Activated CD8-positive, alpha-beta T cell treated with anti-CD3 and anti-CD28 coated beads, Interleukin-2, amount 10 ng/mL, durations not matched to agents 7 days and 5 days (primary cell): ENCODE measurements at regions of chr17 and their contacts with region 1.

Region 1: GRCh38 chr17:76014184-76014924 is 12.8 kb downstream of the EVPL start:
- DNase-seq: peak; percentile 84
- ATAC-seq: peak; percentile 99
- H3K4me3 Mint-ChIP-seq: no peak overlapping the region
- H3K27ac Mint-ChIP-seq: no peak overlapping the region
- H3K4me1 Mint-ChIP-seq: peaks cover 8% of the 10 kb centered on the region
- H3K27me3 Mint-ChIP-seq: no peaks in the 10 kb centered on the region

Region 2: DNA sequence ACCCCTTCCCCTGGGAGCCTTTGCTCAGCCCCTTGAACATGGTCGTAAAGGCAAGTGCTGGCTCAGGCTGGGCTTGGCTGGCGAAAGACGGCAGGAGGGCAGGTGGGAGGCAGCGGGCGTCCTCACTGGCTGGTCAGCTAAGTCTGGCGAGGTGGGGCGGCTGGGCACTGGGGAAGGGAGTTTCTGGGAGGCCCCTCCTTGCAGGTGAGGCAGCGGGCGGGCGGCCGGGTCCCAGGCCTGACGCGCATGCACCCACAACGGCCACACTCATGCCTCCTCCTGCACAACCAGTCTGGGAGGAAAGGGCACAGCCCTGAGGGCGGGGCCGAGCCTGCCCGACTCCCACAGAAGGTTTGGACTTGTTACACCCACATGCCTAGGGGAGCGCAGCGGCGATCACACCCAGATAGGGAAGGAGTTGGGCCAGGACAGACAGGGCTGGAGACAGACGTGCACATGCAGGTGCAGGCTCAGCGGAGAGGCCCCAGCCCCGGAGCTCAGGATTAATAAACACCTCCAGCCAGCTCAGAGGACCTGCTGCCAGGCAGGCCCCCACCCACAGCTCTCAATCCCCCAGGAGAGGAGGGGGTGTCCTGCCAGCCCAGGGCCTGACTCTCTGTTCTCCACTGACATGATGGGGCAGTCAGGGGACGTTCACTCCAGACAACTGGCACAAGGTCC is 12.9 kb after region 1 on chr17 and contains the start of gene EVPL:
- CTCF ChIA-PET with region 1: interaction called, 36 read pairs
- POLR2A ChIA-PET with region 1: interaction called, 15 read pairs
- DNase-seq: no peak
- ATAC-seq: no peak
- H3K4me3 Mint-ChIP-seq: no peak within 1 kb of the TSS
- H3K27ac Mint-ChIP-seq: no peak within 1 kb of the TSS
- H3K4me1 Mint-ChIP-seq: peaks cover 22% of the 10 kb centered on the region
- H3K27me3 Mint-ChIP-seq: no peaks in the 10 kb centered on the region
- total RNA-seq, gene EVPL: 0.34 to 0.47 TPM

Region 3: GRCh38 chr17:76056835-76057234 is 42.5 kb after region 1 on chr17:
- CTCF ChIA-PET with region 1: interaction called, 25 read pairs
- POLR2A ChIA-PET with region 1: no interaction called
- DNase-seq: no peak
- ATAC-seq: no peak
- H3K4me3 Mint-ChIP-seq: no peak overlapping the region
- H3K27ac Mint-ChIP-seq: no peak overlapping the region
- H3K4me1 Mint-ChIP-seq: peaks cover 2% of the 10 kb centered on the region
- H3K27me3 Mint-ChIP-seq: no peaks in the 10 kb centered on the region

Region 4: DNA sequence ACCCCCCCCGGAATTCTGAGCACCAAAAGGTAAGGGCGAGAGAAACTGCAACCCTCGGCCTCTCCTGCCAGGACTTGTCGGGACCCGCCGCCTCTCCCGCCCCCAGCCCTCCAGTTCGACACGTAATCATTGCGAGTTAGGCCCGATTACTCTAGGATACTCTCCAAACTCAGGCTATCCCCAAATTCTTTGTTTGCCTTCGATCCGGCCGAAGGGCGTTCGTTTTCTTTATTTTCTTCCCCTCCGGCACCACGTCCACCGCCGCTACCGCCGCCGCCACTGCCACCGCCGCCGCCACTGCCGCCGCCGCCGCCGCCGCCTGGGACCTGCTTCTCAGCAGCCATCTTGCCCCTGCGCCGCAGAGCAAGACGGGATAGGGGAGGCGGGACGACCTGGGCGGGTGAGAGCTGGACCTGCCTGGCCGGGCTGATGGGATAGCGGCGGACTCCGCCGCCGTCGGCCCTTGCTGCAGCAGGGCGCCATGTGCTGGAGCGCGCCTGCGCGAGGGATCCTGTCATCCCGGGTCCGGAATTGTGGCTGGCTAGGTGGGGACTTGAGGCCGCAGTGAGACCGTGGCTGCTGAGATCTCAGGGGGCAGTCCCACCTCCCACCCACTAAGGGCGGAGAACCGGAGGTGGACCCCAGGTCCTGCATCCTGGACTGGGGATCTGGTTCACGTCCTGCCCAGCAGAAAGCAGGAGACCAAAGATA is 57.9 kb after region 1 on chr17 and contains the start of gene SRP68:
- CTCF ChIA-PET with region 1: interaction called, 19 read pairs
- POLR2A ChIA-PET with region 1: interaction called, 3 read pairs
- DNase-seq: peak; percentile 89
- ATAC-seq: peak; percentile 97
- H3K4me3 Mint-ChIP-seq: peak within 1 kb of the TSS; percentile 96
- H3K27ac Mint-ChIP-seq: peak within 1 kb of the TSS; percentile 91
- H3K4me1 Mint-ChIP-seq: peaks cover 46% of the 10 kb centered on the region
- H3K27me3 Mint-ChIP-seq: peaks cover 33% of the 10 kb centered on the region
- total RNA-seq, gene SRP68: 85.1 to 86.0 TPM

Region 5: GRCh38 chr17:76121932-76122430 is 107.6 kb after region 1 on chr17:
- CTCF ChIA-PET with region 1: interaction called, 13 read pairs
- POLR2A ChIA-PET with region 1: no interaction called
- DNase-seq: no peak
- ATAC-seq: peak; percentile 31
- H3K4me3 Mint-ChIP-seq: peak overlapping the region; percentile 26
- H3K27ac Mint-ChIP-seq: peak overlapping the region; percentile 73
- H3K4me1 Mint-ChIP-seq: peaks cover 45% of the 10 kb centered on the region
- H3K27me3 Mint-ChIP-seq: no peaks in the 10 kb centered on the region

Region 6: GRCh38 chr17:76397687-76398487 is 383.5 kb after region 1 on chr17:
- CTCF ChIA-PET with region 1: interaction called, 14 read pairs
- POLR2A ChIA-PET with region 1: no interaction called
- DNase-seq: peak; percentile 89
- ATAC-seq: peak; percentile 89
- H3K4me3 Mint-ChIP-seq: no peak overlapping the region
- H3K27ac Mint-ChIP-seq: peak overlapping the region; percentile 47
- H3K4me1 Mint-ChIP-seq: no peaks in the 10 kb centered on the region
- H3K27me3 Mint-ChIP-seq: no peaks in the 10 kb centered on the region